ENCODE measurements at regions of chr2 and their contacts with region 1.

Region 1: GRCh38 chr2:66495788-66496640 is 61.1 kb downstream of the MEIS1 start:
- DNase-seq: peak; percentile 95
- H3K4me3 Mint-ChIP-seq: peak overlapping the region; percentile 62
- H3K27ac Mint-ChIP-seq: peak overlapping the region; percentile 85
- H3K4me1 Mint-ChIP-seq: peaks cover 50% of the 10 kb centered on the region
- H3K27me3 Mint-ChIP-seq: no peaks in the 10 kb centered on the region
- CTCF ChIP-seq: peak; percentile 27

Region 2: GRCh38 chr2:66270247-66270646 is 225.8 kb before region 1 on chr2:
- CTCF ChIA-PET with region 1: no interaction called
- POLR2A ChIA-PET with region 1: no interaction called
- intact Hi-C with region 1: no loop called
- DNase-seq: peak; percentile 6
- H3K4me3 Mint-ChIP-seq: no peak overlapping the region
- H3K27ac Mint-ChIP-seq: no peak overlapping the region
- H3K4me1 Mint-ChIP-seq: peaks cover 6% of the 10 kb centered on the region
- H3K27me3 Mint-ChIP-seq: no peaks in the 10 kb centered on the region
- CTCF ChIP-seq: no peak

Region 3: GRCh38 chr2:66508484-66509071 is 12.6 kb after region 1 on chr2:
- CTCF ChIA-PET with region 1: interaction called, 5 read pairs
- POLR2A ChIA-PET with region 1: interaction called, 13 read pairs
- intact Hi-C with region 1: no loop called
- DNase-seq: no peak
- H3K4me3 Mint-ChIP-seq: no peak overlapping the region
- H3K27ac Mint-ChIP-seq: no peak overlapping the region
- H3K4me1 Mint-ChIP-seq: peaks cover 11% of the 10 kb centered on the region
- H3K27me3 Mint-ChIP-seq: no peaks in the 10 kb centered on the region
- CTCF ChIP-seq: no peak

Region 4: GRCh38 chr2:66547887-66548286 is 51.9 kb after region 1 on chr2:
- CTCF ChIA-PET with region 1: interaction called, 3 read pairs
- POLR2A ChIA-PET with region 1: interaction called, 10 read pairs
- intact Hi-C with region 1: no loop called
- DNase-seq: no peak
- H3K4me3 Mint-ChIP-seq: no peak overlapping the region
- H3K27ac Mint-ChIP-seq: no peak overlapping the region
- H3K4me1 Mint-ChIP-seq: peaks cover 14% of the 10 kb centered on the region
- H3K27me3 Mint-ChIP-seq: no peaks in the 10 kb centered on the region
- CTCF ChIP-seq: no peak

Region 5: DNA sequence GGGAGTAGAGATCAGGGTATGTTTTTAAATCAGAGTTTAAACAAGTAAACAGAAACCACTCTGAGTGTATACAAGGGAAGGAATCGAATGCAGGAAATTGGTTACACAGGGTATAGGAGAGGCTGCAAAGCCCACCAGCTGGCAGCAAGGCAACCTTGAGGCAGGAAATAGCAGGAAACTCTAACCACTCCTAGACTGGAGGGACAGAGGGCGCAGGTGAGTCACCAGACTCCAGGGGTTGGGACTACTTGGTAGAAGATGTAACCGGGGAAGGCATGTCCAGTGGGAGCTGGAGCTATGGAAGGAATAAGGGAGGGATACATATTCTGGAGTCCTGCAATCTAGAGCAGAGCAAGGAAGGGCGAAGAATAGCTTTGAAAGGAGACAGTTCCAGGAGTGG is 91.2 kb after region 1 on chr2:
- CTCF ChIA-PET with region 1: no interaction called
- POLR2A ChIA-PET with region 1: no interaction called
- intact Hi-C with region 1: no loop called
- DNase-seq: peak; percentile 66
- H3K4me3 Mint-ChIP-seq: no peak overlapping the region
- H3K27ac Mint-ChIP-seq: no peak overlapping the region
- H3K4me1 Mint-ChIP-seq: no peaks in the 10 kb centered on the region
- H3K27me3 Mint-ChIP-seq: no peaks in the 10 kb centered on the region
- CTCF ChIP-seq: peak; percentile 27

Measured in MCF 10A (cell line).